Cardiac septum (tissue), 1 donor: ENCODE measurements at regions of chr4 and their contacts with region 1.

Region 1: DNA sequence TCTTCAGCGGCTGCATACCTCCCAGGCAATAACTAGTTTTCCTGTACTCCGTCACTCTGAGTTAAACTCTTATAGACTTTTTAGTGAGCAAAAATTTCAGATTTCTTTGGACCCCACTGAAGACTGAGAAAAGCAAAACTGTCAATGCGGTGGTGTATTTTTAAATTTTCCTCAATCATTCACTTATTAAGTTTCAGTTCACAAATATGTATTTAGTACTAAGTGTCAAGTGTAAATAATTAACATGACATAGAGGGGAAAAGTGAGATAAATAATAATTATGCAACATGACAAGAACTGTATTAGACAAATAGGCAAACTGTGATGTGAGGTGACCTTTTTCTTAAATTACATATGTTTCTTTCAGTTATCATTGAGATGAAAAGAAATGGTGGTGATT is 124.4 kb downstream of the NAF1 start:
- DNase-seq: no peak

Region 2: GRCh38 chr4:162497564-162498167 is 544.6 kb before region 1 on chr4:
- intact Hi-C with region 1: loop called (anchors 5 kb)
- DNase-seq: no peak

Region 3: GRCh38 chr4:162645381-162645780 is 396.9 kb before region 1 on chr4:
- intact Hi-C with region 1: loop called (anchors 5 kb)
- DNase-seq: no peak

Region 4: DNA sequence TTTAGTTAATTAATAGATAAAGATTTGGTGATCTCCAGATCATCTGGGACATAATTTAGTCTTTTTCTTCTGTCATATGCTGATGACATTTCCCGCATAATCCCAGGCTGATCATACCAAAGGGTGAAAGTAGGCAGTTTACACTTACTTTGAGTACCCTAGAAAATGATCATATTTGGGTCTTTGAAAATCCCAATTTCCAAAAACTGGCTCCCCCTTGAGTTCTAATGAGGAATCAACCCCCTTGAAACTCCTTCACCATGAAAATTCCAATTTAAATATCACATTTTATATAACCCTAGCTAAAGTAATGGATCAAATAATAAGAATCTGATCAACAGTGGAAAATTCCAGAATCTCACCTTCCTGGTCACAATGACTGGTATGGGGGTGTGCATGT is 99.0 kb before region 1 on chr4:
- intact Hi-C with region 1: no loop called
- DNase-seq: no peak

Region 5: DNA sequence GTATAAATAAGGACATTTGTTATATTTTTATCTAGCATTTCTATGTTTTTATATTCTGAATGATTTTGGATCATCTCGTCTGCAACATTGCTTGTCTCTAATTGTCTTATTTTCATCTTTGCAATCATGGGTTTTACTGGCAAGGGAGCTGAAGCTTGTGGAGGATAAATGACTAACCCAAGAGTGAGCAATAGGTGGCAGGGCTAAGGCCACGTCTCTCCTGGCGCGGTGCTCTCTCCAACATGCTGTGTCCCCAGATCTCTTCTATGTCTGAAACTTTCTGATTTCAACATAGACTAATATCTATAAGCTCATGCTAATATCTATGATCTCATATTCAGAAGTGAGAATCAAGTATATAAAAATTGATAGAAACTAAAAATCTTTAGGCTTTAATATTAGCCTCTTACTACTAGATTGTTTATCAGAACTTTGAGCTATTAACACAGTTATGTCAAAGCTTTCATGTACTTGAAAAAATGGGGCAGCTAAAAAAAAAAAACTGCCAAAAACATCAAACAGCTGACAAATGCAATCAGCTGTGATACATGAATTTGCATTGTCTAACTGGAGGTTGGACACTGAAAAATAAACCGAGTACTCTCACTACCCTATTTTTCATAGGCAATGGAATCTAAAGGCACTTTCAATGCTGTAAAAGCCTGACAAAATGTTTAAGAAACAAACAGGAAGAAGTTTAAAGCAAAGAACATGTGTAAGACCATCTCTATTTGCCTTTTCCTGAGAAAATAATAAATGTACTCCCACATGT is 621.3 kb after region 1 on chr4:
- intact Hi-C with region 1: no loop called
- DNase-seq: no peak